Gastrocnemius medialis (tissue), 4 donors: ENCODE measurements at regions of chr17 and their contacts with region 1.

Region 1: DNA sequence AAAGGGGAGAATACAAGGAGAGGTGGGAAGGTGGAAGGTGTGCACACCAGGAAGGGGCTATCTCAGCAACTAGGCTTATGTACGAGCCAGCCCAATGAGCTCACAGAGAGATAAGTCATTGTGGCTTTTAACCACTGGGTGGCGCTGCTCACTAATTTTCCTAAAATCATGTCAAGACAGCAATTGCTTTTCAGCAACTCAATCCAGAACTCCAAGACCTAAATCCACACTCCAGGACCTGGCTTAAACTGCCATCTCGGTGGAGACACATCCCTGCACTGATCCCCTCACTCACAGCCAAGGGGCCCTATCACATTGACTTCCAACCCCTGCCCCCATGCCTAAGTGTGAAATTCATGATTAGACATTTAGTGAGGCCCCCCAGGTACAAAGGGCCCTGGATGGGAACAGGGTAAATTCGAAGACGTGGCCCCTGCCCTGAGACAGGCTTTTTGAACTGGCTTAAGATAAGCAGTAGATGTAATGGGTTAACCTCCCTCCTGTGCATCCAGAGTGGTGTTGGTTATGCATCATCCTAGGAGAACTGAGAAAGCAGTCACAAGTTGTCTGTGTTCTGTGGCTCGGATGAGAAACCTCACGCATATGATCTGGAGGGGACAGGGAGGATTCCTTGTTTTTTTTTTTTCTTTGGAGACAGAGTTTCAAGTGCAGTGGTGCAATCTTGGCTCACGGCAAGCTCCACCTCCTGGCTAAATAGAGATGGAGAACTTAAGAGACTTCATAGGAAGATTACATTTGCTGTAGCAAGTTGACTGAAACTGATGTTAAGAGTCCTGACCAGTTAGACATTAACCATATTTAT is 11.5 kb downstream of the CCL16 start:
- DNase-seq: peak; percentile 31 to 49
- ATAC-seq: peak; percentile 54 to 58
- H3K4me3 ChIP-seq: no peak overlapping the region
- H3K27ac ChIP-seq: no peak overlapping the region
- H3K4me1 ChIP-seq: peaks cover 0 to 13% of the 10 kb centered on the region in 2 donors
- H3K27me3 ChIP-seq: no peaks in the 10 kb centered on the region
- CTCF ChIP-seq: peak; percentile 20 to 78 (median 74)
- POLR2A ChIP-seq: no peak

Region 2: DNA sequence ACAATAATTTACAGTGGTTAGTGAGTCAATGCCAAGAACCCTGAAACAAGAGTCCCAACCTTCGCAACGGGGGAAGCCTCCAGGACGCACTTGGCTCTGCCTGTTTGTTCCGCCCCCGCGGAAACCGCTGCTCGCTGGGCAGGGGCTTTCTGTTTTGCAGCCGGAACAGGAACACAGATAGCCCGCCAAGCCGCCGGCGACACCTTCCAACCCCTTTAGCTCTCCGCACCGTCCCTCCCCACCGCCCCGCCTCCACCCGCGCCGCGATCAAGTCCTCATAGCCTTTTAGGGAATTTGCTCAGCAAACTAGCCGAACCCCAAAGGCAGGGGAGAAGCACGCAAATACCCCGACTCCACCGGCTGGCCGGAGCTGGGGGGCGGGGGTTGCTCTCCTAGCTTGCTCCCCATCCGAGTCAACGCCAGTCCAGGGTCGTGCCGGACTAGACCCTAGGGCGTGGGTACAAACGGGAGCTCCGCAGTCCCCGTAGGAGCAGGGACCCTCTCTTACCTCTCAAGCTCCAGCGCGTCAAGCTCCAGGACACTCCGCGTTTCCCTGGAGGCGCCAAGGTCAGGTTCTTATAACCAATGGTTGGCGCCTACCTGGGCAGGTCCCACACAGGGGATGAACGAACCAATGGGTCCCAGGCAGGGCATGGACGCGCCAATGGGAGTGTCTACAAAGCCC is 521.4 kb before region 1 on chr17 and contains the start of gene SLFN13:
- in situ Hi-C with region 1: no loop called
- intact Hi-C with region 1: no loop called
- DNase-seq: peak; percentile 9 to 30
- ATAC-seq: peak in 1 of 2 donors; percentile 23
- H3K4me3 ChIP-seq: peak within 1 kb of the TSS; percentile 51 to 74 (median 60)
- H3K27ac ChIP-seq: peak within 1 kb of the TSS in 3 of 4 donors; percentile 32 to 47 (median 39)
- H3K4me1 ChIP-seq: peaks cover 3 to 5% of the 10 kb centered on the region in 2 donors
- H3K27me3 ChIP-seq: peaks cover 28 to 44% (median 32%) of the 10 kb centered on the region in 3 donors
- CTCF ChIP-seq: no peak
- POLR2A ChIP-seq: peak in 1 of 2 donors; percentile 13
- total RNA-seq, gene SLFN13: 0.05 to 1.2 (median 0.32) TPM

Region 3: DNA sequence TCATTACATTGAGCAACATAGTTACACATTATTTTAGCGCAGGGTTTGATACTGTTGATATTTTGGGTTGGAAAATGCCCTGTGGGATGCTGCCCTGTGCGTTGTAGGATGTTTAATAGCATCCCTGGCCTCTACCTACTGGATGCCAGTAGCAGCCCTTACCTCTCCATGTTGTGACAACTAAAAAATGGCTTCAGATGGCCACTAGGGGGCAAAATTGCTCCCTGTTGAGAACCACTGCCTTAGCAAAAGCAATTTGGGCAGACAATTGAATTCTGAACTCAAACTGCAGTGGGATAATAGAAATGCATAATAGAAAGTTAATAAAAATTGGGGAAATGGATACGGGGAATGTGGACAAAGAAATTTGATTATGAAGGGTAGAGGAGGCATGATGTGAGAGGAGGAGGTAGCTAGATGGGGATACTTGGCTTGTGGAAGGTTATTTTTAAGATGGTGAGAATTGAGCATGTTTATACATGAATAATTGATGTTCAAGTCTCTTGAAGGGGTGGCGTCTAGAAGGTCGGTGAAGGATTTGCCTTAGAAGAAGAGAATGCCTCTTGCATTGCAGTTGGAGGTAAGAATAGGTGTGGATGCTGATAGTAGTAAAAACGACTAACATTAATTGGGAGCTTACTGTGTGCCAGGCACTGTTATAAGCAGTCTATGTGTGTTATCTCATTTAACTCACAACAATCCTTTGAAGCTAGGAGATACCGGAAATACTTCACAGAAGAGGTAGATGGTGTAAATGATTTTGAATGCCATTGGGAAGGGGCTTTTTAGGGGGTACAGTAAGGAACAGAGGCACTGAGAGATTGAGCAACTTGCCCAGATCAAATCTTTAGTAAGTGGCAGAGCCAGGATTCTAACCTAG is 120.1 kb before region 1 on chr17:
- in situ Hi-C with region 1: loop called in 1 of 4 experiments (anchors 25 kb)
- intact Hi-C with region 1: no loop called
- DNase-seq: no peak
- ATAC-seq: no peak
- H3K4me3 ChIP-seq: no peak overlapping the region
- H3K27ac ChIP-seq: no peak overlapping the region
- H3K4me1 ChIP-seq: no peaks in the 10 kb centered on the region
- H3K27me3 ChIP-seq: no peaks in the 10 kb centered on the region
- CTCF ChIP-seq: peak; percentile 24 to 60 (median 44)
- POLR2A ChIP-seq: no peak

Region 4: GRCh38 chr17:36072431-36073121 is 102.8 kb after region 1 on chr17:
- in situ Hi-C with region 1: no loop called
- intact Hi-C with region 1: loop called (anchors 5 kb)
- DNase-seq: no peak
- ATAC-seq: no peak
- H3K4me3 ChIP-seq: no peak overlapping the region
- H3K27ac ChIP-seq: no peak overlapping the region
- H3K4me1 ChIP-seq: no peaks in the 10 kb centered on the region
- H3K27me3 ChIP-seq: no peaks in the 10 kb centered on the region
- CTCF ChIP-seq: peak in 3 of 5 experiments; percentile 34 to 57 (median 45)
- POLR2A ChIP-seq: no peak

Region 5: DNA sequence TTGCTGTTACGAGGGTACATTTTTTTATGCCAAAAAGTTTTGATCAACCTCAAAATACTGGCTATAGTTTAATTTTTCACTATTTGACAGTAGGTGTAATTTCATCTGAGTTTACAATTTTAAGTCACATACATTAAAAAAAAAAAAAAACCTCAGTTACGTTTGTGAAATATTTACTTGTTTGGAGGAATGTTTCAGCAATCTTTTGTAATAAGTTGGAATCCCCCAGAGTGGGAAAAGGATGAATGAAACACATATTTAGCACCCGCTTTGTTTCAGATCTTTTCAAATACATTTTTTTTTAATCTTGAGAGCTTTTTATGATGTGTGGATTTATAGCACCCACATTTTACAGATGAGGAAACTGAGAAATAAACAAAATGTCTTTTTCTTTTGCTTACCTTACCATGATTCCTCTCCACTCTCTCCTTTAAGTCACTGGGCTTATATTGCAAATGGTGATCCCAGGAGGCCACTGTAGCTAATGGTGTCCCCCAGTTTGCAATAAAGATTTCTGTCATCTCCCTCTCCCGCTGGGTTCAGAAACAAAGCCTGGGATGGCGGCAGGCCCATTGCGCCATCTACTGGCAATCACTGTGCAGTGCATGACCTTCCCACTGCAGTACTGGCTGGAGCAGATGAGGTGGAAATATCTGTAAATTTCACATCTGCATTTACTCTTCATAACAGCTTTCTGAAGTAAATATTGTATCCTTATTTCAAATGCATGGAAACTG is 179.0 kb after region 1 on chr17:
- in situ Hi-C with region 1: loop called in 3 of 4 experiments (anchors 5 to 10 kb)
- intact Hi-C with region 1: loop called (anchors 10 kb)
- DNase-seq: peak in 1 of 2 donors; percentile 34
- ATAC-seq: peak; percentile 50 to 64
- H3K4me3 ChIP-seq: no peak overlapping the region
- H3K27ac ChIP-seq: no peak overlapping the region
- H3K4me1 ChIP-seq: no peaks in the 10 kb centered on the region
- H3K27me3 ChIP-seq: peaks cover 0 to 18% (median 0%) of the 10 kb centered on the region in 3 donors
- CTCF ChIP-seq: peak; percentile 55 to 95 (median 69)
- POLR2A ChIP-seq: no peak

Region 6: GRCh38 chr17:36475346-36475970 is 505.7 kb after region 1 on chr17:
- in situ Hi-C with region 1: loop called (anchors 5 to 25 kb)
- intact Hi-C with region 1: no loop called
- DNase-seq: no peak
- ATAC-seq: no peak
- H3K4me3 ChIP-seq: no peak overlapping the region
- H3K27ac ChIP-seq: no peak overlapping the region
- H3K4me1 ChIP-seq: no peaks in the 10 kb centered on the region
- H3K27me3 ChIP-seq: peaks cover 0 to 4% (median 2%) of the 10 kb centered on the region in 3 donors
- CTCF ChIP-seq: no peak
- POLR2A ChIP-seq: no peak

Region 7: DNA sequence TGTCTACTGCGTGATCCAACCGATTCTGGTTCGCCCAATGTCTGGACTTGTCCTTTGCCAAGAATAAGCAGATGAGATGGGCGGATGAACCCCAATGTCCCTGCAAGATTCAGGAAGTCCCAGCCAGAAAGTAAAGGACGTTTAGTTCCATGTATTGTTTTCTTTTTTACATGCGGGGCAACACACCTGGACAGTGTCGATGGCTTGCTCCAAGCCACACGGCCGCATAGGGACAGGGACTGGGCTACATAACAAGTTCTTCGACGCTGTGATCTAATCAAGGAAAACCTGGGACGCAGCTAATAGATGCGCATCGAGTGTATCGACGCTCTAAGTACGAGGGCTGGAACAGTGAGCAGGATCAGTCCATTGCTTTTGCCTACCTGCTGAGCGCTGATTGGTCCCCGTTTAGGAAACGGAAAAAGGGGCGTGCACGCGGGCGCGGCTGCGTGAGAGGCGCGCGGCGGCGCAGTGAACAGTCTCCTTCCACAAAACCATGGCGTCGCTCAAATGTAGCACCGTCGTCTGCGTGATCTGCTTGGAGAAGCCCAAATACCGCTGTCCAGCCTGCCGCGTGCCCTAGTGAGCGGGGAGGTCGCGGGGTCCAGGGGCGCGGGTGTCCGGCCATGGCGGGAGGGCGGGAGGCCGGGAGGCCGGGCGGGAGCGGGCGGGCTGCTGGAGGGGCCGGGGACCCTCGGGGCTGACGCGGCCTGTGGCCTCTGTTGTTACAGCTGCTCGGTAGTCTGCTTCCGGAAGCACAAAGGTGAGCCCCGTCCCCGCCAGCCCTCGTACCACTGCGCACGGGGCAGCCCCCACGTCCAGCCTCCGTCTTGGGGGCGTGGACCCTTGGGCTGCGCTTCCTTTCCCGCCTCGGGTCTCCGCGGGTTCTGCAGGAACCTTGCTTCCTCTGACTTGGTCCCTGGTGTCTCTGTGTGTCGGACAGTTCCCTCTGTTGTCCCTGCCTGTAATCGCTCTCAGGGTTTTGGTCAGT is 516.7 kb after region 1 on chr17 and contains the start of gene ZNHIT3:
- in situ Hi-C with region 1: loop called in 3 of 4 experiments (anchors 10 to 25 kb)
- intact Hi-C with region 1: loop called (anchors 1 kb)
- DNase-seq: peak; percentile 84 to 88
- ATAC-seq: peak; percentile 96 to 97
- H3K4me3 ChIP-seq: peak within 1 kb of the TSS; percentile 80 to 92 (median 86)
- H3K27ac ChIP-seq: peak within 1 kb of the TSS; percentile 76 to 91 (median 82)
- H3K4me1 ChIP-seq: peaks cover 24 to 34% of the 10 kb centered on the region in 2 donors
- H3K27me3 ChIP-seq: peaks cover 0 to 3% (median 0%) of the 10 kb centered on the region in 3 donors
- CTCF ChIP-seq: no peak
- POLR2A ChIP-seq: peak; percentile 22 to 42
- total RNA-seq, gene ZNHIT3: 33.4 to 52.7 (median 39.3) TPM

Region 8: GRCh38 chr17:36601303-36602029 is 631.7 kb after region 1 on chr17 and contains the start of gene MRM1:
- in situ Hi-C with region 1: no loop called
- intact Hi-C with region 1: no loop called
- DNase-seq: peak; percentile 86 to 92
- ATAC-seq: peak; percentile 92 to 93
- H3K4me3 ChIP-seq: peak within 1 kb of the TSS; percentile 82 to 100 (median 88)
- H3K27ac ChIP-seq: peak within 1 kb of the TSS; percentile 76 to 95 (median 90)
- H3K4me1 ChIP-seq: peaks cover 12 to 23% of the 10 kb centered on the region in 2 donors
- H3K27me3 ChIP-seq: no peaks in the 10 kb centered on the region
- CTCF ChIP-seq: peak in 1 of 5 experiments; percentile 21
- POLR2A ChIP-seq: peak; percentile 40 to 66
- total RNA-seq, gene MRM1: 8.8 to 13.9 (median 10.8) TPM